AG04450 (cell line): ENCODE measurements at regions of chr2 and their contacts with region 1.

Region 1: GRCh38 chr2:161250864-161251436 is 57.3 kb upstream of the PSMD14 start:
- DNase-seq: no peak
- H3K4me3 ChIP-seq: no peak overlapping the region
- H3K27ac ChIP-seq: no peak overlapping the region
- H3K27me3 ChIP-seq: peaks cover 20% of the 10 kb centered on the region
- CTCF ChIP-seq: peak; percentile 73

Region 2: GRCh38 chr2:161017780-161018470 is 233.0 kb before region 1 on chr2:
- CTCF ChIA-PET with region 1: no interaction called
- POLR2A ChIA-PET with region 1: no interaction called
- DNase-seq: no peak
- H3K4me3 ChIP-seq: no peak overlapping the region
- H3K27ac ChIP-seq: no peak overlapping the region
- H3K27me3 ChIP-seq: no peaks in the 10 kb centered on the region
- CTCF ChIP-seq: no peak

Region 3: DNA sequence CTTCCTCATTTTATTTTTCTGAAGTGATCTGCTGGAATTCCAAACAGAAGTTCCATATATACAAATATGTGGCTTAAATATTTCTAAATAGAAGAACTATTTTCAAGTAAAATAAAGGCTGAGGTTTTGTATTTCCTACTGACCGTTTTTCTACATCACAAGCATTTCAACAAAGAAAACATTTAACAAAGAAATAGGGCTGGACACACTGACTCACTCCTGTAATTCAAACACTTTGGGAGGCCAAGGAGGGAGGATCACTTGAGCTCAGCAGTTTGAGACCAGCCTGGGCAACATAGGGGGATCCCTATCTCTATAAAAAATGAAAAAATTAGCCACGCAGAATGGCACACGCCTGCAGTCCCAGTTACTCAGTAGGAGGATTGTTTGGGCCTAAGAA is 46.1 kb before region 1 on chr2:
- CTCF ChIA-PET with region 1: no interaction called
- POLR2A ChIA-PET with region 1: no interaction called
- DNase-seq: peak; percentile 7
- H3K4me3 ChIP-seq: no peak overlapping the region
- H3K27ac ChIP-seq: peak overlapping the region; percentile 65
- H3K27me3 ChIP-seq: no peaks in the 10 kb centered on the region
- CTCF ChIP-seq: no peak

Region 4: GRCh38 chr2:161237392-161238264 is 13.3 kb before region 1 on chr2:
- CTCF ChIA-PET with region 1: interaction called, 19 read pairs
- POLR2A ChIA-PET with region 1: no interaction called
- DNase-seq: no peak
- H3K4me3 ChIP-seq: peak overlapping the region; percentile 69
- H3K27ac ChIP-seq: no peak overlapping the region
- H3K27me3 ChIP-seq: no peaks in the 10 kb centered on the region
- CTCF ChIP-seq: no peak

Region 5: DNA sequence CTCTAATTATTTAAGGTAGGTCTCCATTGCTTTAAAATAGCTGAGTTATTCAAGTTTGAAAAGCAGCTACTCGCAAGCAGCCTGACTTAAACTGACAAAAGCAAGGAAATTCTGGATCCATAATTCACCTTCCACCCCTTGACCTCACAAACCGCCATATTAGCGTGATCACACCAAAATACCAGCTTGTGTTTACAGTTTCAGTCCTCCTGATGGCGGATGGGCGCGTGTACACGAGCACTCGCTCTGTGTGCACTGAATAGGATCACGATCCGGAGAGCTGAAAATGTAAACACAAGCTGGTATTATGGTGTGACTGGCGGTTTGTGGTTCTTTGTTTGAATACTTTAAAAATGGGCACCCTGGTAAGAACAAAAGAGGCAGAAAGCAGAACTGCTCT is 14.9 kb after region 1 on chr2:
- CTCF ChIA-PET with region 1: interaction called, 34 read pairs
- POLR2A ChIA-PET with region 1: no interaction called
- DNase-seq: no peak
- H3K4me3 ChIP-seq: no peak overlapping the region
- H3K27ac ChIP-seq: no peak overlapping the region
- H3K27me3 ChIP-seq: peaks cover 2% of the 10 kb centered on the region
- CTCF ChIP-seq: no peak

Region 6: GRCh38 chr2:161273038-161273760 is 22.2 kb after region 1 on chr2:
- CTCF ChIA-PET with region 1: interaction called, 42 read pairs
- POLR2A ChIA-PET with region 1: no interaction called
- DNase-seq: peak; percentile 34
- H3K4me3 ChIP-seq: no peak overlapping the region
- H3K27ac ChIP-seq: no peak overlapping the region
- H3K27me3 ChIP-seq: no peaks in the 10 kb centered on the region
- CTCF ChIP-seq: peak; percentile 66

Region 7: DNA sequence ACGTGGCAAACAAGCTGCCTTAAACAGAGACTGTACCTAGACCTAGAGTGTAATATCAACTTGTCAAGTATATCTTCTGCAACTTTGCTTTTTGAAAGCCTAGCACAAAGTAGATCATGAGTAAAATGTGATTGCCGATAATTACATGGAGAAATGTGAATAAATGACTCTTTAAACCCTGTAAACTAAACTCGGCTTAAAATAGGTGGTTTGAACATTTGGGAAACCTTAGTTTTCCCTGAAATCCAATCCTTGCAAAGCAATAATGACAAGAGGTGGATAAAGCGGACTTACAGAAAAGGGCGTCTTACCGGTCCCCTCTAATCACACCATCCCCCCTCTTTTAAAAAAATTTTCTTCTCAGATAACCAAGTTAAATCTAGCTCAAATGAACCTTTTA is 56.7 kb after region 1 on chr2:
- CTCF ChIA-PET with region 1: no interaction called
- POLR2A ChIA-PET with region 1: no interaction called
- DNase-seq: no peak
- H3K4me3 ChIP-seq: peak overlapping the region; percentile 88
- H3K27ac ChIP-seq: peak overlapping the region; percentile 94
- H3K27me3 ChIP-seq: no peaks in the 10 kb centered on the region
- CTCF ChIP-seq: no peak